ENCODE measurements at regions of chr11 and their contacts with region 1.

Region 1: GRCh38 chr11:32052218-32052617 is 38.7 kb upstream of the RCN1 start:
- DNase-seq: peak; percentile 72
- H3K4me3 Mint-ChIP-seq: no peak overlapping the region
- H3K27ac Mint-ChIP-seq: no peak overlapping the region
- H3K4me1 Mint-ChIP-seq: no peaks in the 10 kb centered on the region
- H3K27me3 Mint-ChIP-seq: peaks cover 27% of the 10 kb centered on the region

Region 2: GRCh38 chr11:32065865-32066264 is 13.6 kb after region 1 on chr11:
- CTCF ChIA-PET with region 1: interaction called, 16 read pairs
- intact Hi-C with region 1: no loop called
- DNase-seq: no peak
- H3K4me3 Mint-ChIP-seq: no peak overlapping the region
- H3K27ac Mint-ChIP-seq: no peak overlapping the region
- H3K4me1 Mint-ChIP-seq: no peaks in the 10 kb centered on the region
- H3K27me3 Mint-ChIP-seq: peaks cover 34% of the 10 kb centered on the region

Region 3: GRCh38 chr11:32200136-32200847 is 148.1 kb after region 1 on chr11:
- CTCF ChIA-PET with region 1: no interaction called
- intact Hi-C with region 1: no loop called
- DNase-seq: no peak
- H3K4me3 Mint-ChIP-seq: no peak overlapping the region
- H3K27ac Mint-ChIP-seq: no peak overlapping the region
- H3K4me1 Mint-ChIP-seq: no peaks in the 10 kb centered on the region
- H3K27me3 Mint-ChIP-seq: no peaks in the 10 kb centered on the region

Region 4: DNA sequence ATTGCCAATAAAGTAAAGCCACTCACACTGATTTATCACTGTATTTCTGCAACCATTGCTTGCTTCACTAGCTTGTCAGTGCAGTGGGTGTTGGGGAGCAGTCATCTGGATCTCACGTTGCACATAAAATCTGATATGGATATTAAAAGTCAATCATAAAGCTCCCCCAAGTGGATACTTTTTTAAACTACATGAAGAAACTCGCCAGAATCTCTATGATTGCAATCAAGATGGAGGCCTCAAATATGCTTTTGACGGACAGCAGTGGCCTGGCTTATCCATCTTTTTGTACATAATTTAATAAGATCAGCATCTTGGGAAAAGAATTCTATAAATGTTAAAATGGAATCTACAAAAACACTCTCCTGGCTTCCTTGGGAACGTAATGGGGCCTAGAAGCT is 245.4 kb after region 1 on chr11:
- CTCF ChIA-PET with region 1: interaction called, 16 read pairs
- intact Hi-C with region 1: loop called (anchors 1 kb)
- DNase-seq: no peak
- H3K4me3 Mint-ChIP-seq: no peak overlapping the region
- H3K27ac Mint-ChIP-seq: no peak overlapping the region
- H3K4me1 Mint-ChIP-seq: no peaks in the 10 kb centered on the region
- H3K27me3 Mint-ChIP-seq: no peaks in the 10 kb centered on the region

Measured in activated naive CD4-positive, alpha-beta T cell treated with anti-CD3 and anti-CD28 coated beads for 36 hours (primary cell).